Heart left ventricle (tissue), 16 donors: ENCODE measurements at regions of chrX and their contacts with region 1.

Region 1: GRCh38 chrX:149539283-149540130 is 1.3 kb upstream of the EOLA1 start:
- DNase-seq: peak; percentile 88 to 94 (median 91)
- ATAC-seq: peak; percentile 62 to 78 (median 74)
- H3K4me3 ChIP-seq: peak overlapping the region in 11 of 12 donors; percentile 13 to 90 (median 66)
- H3K27ac ChIP-seq: peak overlapping the region in 10 of 12 donors; percentile 63 to 96 (median 75)
- H3K4me1 ChIP-seq: peaks cover 0 to 10% (median 5%) of the 10 kb centered on the region in 12 donors
- H3K27me3 ChIP-seq: no peaks in the 10 kb centered on the region
- CTCF ChIP-seq: no peak
- POLR2A ChIP-seq: no peak

Region 2: DNA sequence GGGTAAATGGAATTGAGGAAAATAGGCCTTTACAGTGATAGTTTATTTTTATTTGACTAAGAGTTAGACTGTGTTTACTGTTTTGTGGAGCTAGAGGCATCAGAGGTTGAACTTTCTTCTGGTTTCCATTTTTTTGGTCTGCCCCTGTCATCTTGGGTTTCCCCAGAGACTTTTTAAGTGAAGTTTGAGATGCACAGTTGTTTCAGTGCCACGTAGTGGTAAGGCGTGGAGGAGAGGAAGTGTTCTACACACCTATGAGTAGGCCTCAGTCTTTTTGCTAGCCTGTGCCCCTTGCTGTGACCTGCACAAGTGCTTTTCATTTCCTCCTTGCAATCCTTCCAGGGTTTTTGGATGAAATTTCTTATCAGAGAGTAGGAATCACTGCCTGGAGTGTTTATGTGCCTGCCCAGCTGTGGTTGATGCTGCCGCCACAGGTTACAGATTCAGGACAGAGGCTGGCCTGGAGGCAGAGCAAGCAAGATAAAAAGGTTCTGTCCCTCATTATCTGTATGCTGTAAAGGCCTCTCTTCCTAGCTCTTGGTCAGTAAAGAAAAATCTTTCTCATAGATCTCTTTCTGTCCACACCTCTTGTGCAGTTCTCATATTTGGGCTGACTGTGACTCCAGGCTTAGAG is 377.4 kb after region 1 on chrX:
- intact Hi-C with region 1: loop called in 1 of 10 experiments (anchors 10 kb)
- DNase-seq: no peak
- ATAC-seq: no peak
- H3K4me3 ChIP-seq: no peak overlapping the region
- H3K27ac ChIP-seq: no peak overlapping the region
- H3K4me1 ChIP-seq: no peaks in the 10 kb centered on the region
- H3K27me3 ChIP-seq: no peaks in the 10 kb centered on the region
- CTCF ChIP-seq: no peak
- POLR2A ChIP-seq: no peak